AG04449 (cell line): ENCODE measurements at regions of chr9 and their contacts with region 1.

Region 1: GRCh38 chr9:83677596-83677995 is 30.2 kb downstream of the UBQLN1 start:
- DNase-seq: no peak
- H3K4me3 ChIP-seq: no peak overlapping the region
- CTCF ChIP-seq: no peak

Region 2: GRCh38 chr9:83665580-83666200 is 11.9 kb before region 1 on chr9:
- CTCF ChIA-PET with region 1: interaction called, 11 read pairs
- POLR2A ChIA-PET with region 1: no interaction called
- DNase-seq: no peak
- H3K4me3 ChIP-seq: no peak overlapping the region
- CTCF ChIP-seq: no peak

Region 3: GRCh38 chr9:83744212-83744611 is 66.6 kb after region 1 on chr9:
- CTCF ChIA-PET with region 1: no interaction called
- POLR2A ChIA-PET with region 1: no interaction called
- DNase-seq: no peak
- H3K4me3 ChIP-seq: no peak overlapping the region
- CTCF ChIP-seq: no peak